A549 (cell line): ENCODE measurements at regions of chr14 and their contacts with region 1.

Region 1: GRCh38 chr14:75628816-75629215 is 31.9 kb downstream of the ERG28 start:
- DNase-seq: no peak
- ATAC-seq: no peak
- H3K4me3 ChIP-seq: no peak overlapping the region
- H3K27ac ChIP-seq: no peak overlapping the region
- H3K4me1 ChIP-seq: peaks cover 2% of the 10 kb centered on the region; the same call in 1 of the 3 replicates
- CTCF ChIP-seq: no peak
- EP300 ChIP-seq: no peak
- POLR2A ChIP-seq: no peak
- RAD21 ChIP-seq: no peak

Region 2: DNA sequence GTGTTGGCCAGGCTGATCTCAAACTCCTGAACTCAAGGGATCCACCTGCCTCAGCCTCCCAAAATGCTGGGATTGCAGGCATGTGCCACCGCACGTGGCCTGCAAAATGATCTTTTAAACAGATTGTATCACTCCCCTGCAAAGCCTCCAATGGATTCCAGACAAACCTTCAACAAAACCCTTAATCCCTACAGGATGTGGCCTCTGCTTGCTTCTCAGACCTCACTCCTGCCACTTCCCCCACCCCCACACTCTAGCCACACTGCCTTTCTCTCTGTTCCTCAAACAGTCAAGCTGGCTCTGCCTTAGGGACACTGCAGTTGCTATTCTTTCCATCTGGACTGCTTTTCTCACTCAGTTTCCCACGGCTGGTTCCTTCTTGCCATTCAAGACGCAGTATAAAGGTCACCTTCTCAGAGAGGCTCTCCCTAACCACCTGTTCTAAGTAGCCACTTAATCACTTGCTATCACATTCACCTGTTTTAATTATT is 405.1 kb before region 1 on chr14:
- CTCF ChIA-PET with region 1: no interaction called
- POLR2A ChIA-PET with region 1: no interaction called
- DNase-seq: no peak
- ATAC-seq: peak in 1 of 2 experiments; percentile 43; a peak in 2 of 6 replicates
- H3K4me3 ChIP-seq: no peak overlapping the region
- H3K27ac ChIP-seq: no peak overlapping the region
- H3K4me1 ChIP-seq: no peaks in the 10 kb centered on the region
- CTCF ChIP-seq: no peak
- EP300 ChIP-seq: no peak
- POLR2A ChIP-seq: no peak
- RAD21 ChIP-seq: no peak

Region 3: DNA sequence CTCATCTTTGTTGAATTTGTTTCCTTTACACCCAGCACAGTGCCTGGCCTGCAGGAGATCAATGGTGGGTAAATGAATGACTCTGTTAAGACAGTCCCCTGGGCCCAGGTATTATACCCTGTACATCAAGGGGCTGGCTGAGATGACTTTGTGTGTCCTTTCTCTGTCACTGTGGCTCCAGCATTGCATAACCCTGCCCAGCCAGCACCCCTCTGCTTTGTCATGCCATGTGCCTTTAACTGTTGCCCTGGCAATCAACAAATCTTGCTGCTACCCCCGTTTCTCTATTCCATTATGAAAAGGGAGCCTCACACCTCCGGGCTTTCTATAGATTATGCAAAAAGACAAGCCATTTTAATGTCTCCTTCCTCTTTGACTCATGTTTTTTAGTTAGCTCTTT is 58.0 kb before region 1 on chr14:
- CTCF ChIA-PET with region 1: no interaction called
- POLR2A ChIA-PET with region 1: no interaction called
- DNase-seq: no peak
- ATAC-seq: no peak
- H3K4me3 ChIP-seq: no peak overlapping the region
- H3K27ac ChIP-seq: no peak overlapping the region
- H3K4me1 ChIP-seq: no peaks in the 10 kb centered on the region
- CTCF ChIP-seq: no peak
- EP300 ChIP-seq: no peak
- POLR2A ChIP-seq: no peak
- RAD21 ChIP-seq: no peak

Region 4: GRCh38 chr14:75648066-75648838 is 19.4 kb after region 1 on chr14:
- CTCF ChIA-PET with region 1: interaction called, 14 read pairs
- POLR2A ChIA-PET with region 1: no interaction called
- DNase-seq: peak; percentile 64 to 82
- ATAC-seq: peak; percentile 92 to 93
- H3K4me3 ChIP-seq: no peak overlapping the region
- H3K27ac ChIP-seq: peak overlapping the region; percentile 73 to 84
- H3K4me1 ChIP-seq: peaks cover 60% of the 10 kb centered on the region
- CTCF ChIP-seq: no peak
- EP300 ChIP-seq: peak; percentile 57 to 86; a peak in 3 of 5 replicates
- POLR2A ChIP-seq: no peak
- RAD21 ChIP-seq: no peak; a peak in 2 of 5 replicates

Region 5: GRCh38 chr14:75685910-75686309 is 57.1 kb after region 1 on chr14:
- CTCF ChIA-PET with region 1: no interaction called
- POLR2A ChIA-PET with region 1: no interaction called
- DNase-seq: no peak
- ATAC-seq: no peak
- H3K4me3 ChIP-seq: no peak overlapping the region
- H3K27ac ChIP-seq: no peak overlapping the region
- H3K4me1 ChIP-seq: no peaks in the 10 kb centered on the region
- CTCF ChIP-seq: no peak
- EP300 ChIP-seq: no peak
- POLR2A ChIP-seq: no peak
- RAD21 ChIP-seq: no peak